ENCODE measurements at regions of chr15 and their contacts with region 1.

Region 1: GRCh38 chr15:63600616-63601025 is 3.4 kb downstream of the FBXL22 start:
- DNase-seq: peak; percentile 91
- ATAC-seq: peak; percentile 83
- H3K4me3 Mint-ChIP-seq: peak overlapping the region; percentile 91
- H3K27ac Mint-ChIP-seq: peak overlapping the region; percentile 93
- H3K4me1 Mint-ChIP-seq: peaks cover 42% of the 10 kb centered on the region
- H3K27me3 Mint-ChIP-seq: peaks cover 3% of the 10 kb centered on the region

Region 2: DNA sequence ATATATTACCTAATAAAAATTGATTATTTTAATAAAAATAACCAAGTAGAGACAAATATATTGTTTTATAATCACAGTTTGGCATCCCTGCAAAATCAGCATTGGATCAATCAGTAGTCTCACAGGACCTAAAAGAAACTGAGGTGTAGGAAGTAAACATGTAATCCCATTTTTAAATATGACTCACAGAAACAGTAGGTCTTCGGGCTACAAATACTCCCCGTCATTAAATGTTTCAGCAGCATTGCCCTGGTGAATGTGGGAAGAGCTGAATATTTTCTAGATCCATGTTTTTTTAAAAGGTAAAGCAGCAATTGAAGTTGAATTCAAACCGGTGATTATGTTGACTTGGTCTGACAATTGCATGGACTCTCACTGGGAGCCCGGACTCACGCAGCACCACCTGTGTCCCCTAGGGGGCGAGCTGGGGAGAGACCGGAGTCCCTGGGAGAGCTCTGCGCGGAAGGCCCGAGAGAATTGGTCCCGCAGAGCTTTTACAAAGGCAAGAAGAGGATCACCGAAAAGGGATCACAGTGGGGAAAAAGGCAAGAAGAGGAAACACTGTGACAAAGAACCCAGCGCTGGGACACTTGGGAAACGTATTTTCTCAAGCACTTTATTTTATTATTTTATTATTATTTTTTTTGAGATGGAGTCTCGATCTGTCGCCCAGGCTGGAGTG is 113.4 kb before region 1 on chr15:
- CTCF ChIA-PET with region 1: interaction called, 24 read pairs
- DNase-seq: peak; percentile 94
- ATAC-seq: peak; percentile 96
- H3K4me3 Mint-ChIP-seq: peak overlapping the region; percentile 53
- H3K27ac Mint-ChIP-seq: peak overlapping the region; percentile 70
- H3K4me1 Mint-ChIP-seq: peaks cover 51% of the 10 kb centered on the region
- H3K27me3 Mint-ChIP-seq: peaks cover 7% of the 10 kb centered on the region

Region 3: DNA sequence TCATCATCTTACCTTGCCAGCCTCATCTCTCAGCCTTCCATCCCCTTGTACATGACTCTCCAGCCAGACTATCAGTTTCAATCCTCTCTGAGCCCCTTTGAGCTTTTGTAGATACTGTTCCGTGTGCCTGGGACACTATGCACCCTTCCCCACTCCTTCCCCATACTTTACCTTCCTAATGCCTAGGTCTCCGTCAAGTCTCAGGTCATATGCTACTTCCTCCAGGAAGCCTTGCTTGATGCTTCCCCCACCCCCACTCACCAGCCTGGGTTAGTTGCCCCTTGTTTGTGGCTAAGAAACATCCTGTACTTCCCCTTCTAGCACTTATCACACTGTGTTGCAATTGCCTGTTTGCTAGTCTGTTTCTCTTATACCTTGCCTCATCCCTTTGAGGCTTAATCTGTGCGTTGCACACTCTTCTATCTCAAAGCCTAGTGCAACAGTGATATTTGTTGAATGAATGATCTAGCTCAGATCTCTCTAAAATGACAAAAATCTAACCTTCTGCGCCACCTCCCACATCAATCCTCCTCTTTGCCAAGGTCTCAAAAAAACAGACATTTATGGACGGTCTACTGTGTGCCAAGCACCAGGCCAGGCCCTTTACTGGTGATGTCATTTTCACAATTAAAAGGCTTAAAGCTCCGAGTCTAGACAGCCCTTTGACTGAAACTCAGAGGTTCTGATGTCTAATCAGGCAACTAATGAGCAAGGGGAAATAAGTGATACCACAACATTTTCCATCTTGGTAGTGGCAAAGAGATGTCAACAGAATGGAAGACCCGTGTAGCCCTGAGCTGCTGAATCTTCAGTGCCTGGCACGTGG is 102.8 kb before region 1 on chr15:
- CTCF ChIA-PET with region 1: interaction called, 14 read pairs
- DNase-seq: peak; percentile 86
- ATAC-seq: peak; percentile 47
- H3K4me3 Mint-ChIP-seq: no peak overlapping the region
- H3K27ac Mint-ChIP-seq: no peak overlapping the region
- H3K4me1 Mint-ChIP-seq: peaks cover 72% of the 10 kb centered on the region
- H3K27me3 Mint-ChIP-seq: no peaks in the 10 kb centered on the region

Region 4: GRCh38 chr15:63504247-63504978 is 96.2 kb before region 1 on chr15 and contains the start of gene USP3:
- CTCF ChIA-PET with region 1: interaction called, 21 read pairs
- DNase-seq: peak; percentile 95
- ATAC-seq: peak; percentile 65
- H3K4me3 Mint-ChIP-seq: peak within 1 kb of the TSS; percentile 90
- H3K27ac Mint-ChIP-seq: peak within 1 kb of the TSS; percentile 93
- H3K4me1 Mint-ChIP-seq: peaks cover 73% of the 10 kb centered on the region
- H3K27me3 Mint-ChIP-seq: no peaks in the 10 kb centered on the region
- total RNA-seq, gene USP3: 50.5 to 67.1 TPM

Region 5: DNA sequence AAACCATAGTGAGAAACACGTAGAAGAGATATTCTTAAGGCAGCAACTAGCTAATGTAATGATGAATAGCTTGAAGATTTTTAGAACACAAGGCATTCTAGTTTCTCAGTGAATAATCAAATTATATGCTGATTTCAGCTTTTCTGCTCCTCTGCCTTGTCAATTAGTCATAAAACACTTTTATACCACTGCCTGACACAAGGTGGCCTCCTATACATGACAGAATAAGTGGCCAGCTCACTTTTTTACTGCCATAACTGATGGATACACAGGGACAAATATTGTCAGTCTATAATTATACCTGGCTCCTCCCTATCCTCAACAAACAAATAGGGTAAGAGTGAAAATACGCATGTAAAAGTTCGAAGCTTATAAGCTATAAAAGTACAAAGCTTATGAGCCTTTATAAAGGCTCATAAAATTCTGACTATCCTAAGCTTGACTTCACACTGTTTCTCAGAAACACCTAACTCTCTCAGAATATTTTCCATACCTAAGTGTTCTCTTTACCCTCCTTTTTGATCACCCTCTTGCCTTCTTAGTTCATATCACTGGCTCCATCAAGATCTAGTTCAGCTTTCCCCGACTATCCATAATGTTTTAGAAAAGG is 151.6 kb after region 1 on chr15:
- CTCF ChIA-PET with region 1: no interaction called
- DNase-seq: peak; percentile 55
- ATAC-seq: peak; percentile 82
- H3K4me3 Mint-ChIP-seq: no peak overlapping the region
- H3K27ac Mint-ChIP-seq: no peak overlapping the region
- H3K4me1 Mint-ChIP-seq: peaks cover 7% of the 10 kb centered on the region
- H3K27me3 Mint-ChIP-seq: no peaks in the 10 kb centered on the region

Region 6: GRCh38 chr15:64067564-64068030 is 467.0 kb after region 1 on chr15:
- CTCF ChIA-PET with region 1: interaction called, 151 read pairs
- DNase-seq: peak; percentile 79
- ATAC-seq: peak; percentile 87
- H3K4me3 Mint-ChIP-seq: no peak overlapping the region
- H3K27ac Mint-ChIP-seq: peak overlapping the region; percentile 57
- H3K4me1 Mint-ChIP-seq: peaks cover 23% of the 10 kb centered on the region
- H3K27me3 Mint-ChIP-seq: no peaks in the 10 kb centered on the region

Measured in activated CD8-positive, alpha-beta memory T cell treated with anti-CD3 and anti-CD28 coated beads, Interleukin-2, amount 10 ng/mL, durations not matched to agents 7 days and 5 days (primary cell).